SK-N-SH (cell line): ENCODE measurements at regions of chr2 and their contacts with region 1.

Region 1: DNA sequence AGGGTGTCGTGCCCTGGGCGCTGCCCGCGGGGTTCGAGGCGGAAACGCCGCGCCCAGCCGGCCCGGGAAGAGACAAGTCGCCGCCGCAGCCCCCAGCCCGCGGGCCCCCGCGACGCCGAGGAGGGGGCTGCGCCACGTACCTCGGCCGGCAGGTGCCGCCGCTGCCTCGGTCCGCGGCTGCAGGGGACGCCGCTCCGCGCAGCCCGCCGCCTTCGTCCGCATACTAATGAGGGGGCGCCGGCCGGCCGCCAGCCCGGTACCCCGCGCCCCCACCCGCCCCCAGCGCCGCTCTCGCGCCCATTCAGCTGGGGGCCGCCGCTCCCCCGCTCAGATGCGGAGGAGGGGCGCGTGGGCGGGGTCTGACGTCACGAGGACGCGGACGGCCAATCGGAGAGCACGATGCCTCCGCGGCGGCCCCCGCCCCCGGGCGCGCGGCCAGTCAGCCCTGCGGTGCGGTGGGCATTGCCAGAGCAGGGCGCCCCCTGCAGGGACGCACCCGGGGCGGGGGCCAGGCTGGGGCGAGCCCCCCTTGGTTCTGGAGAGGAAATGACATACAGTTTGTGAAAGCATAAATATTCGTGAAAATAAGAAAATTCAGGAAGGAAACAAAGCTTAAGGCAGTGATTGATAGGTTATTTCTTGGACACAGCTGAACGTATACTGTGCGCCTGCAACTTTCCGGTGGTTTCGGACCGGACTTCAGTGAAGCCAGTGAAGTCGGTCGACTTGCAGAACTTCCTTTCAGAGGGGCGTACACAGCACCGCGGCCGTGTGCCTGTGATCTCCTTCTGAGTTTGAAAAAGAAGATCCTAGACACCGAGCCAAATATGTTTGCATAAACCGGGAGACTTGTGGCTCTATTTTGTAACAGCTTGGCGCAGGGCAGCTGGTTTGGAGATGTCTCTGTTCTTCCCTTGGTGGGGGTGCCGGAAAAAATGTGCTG is at the start of gene ST3GAL5:
- DNase-seq: peak; percentile 97
- H3K4me3 ChIP-seq: peak within 1 kb of the TSS; percentile 71 to 73
- H3K27ac ChIP-seq: peak within 1 kb of the TSS; percentile 70 to 72
- H3K4me1 ChIP-seq: peaks cover 18 to 30% of the 10 kb centered on the region in 2 experiments
- H3K27me3 ChIP-seq: no peaks in the 10 kb centered on the region
- CTCF ChIP-seq: peak; percentile 96
- EP300 ChIP-seq: no peak
- RAD21 ChIP-seq: peak; percentile 54
- polyA plus RNA-seq, gene ST3GAL5: 37.6 and 55.7 TPM in 2 replicates

Region 2: DNA sequence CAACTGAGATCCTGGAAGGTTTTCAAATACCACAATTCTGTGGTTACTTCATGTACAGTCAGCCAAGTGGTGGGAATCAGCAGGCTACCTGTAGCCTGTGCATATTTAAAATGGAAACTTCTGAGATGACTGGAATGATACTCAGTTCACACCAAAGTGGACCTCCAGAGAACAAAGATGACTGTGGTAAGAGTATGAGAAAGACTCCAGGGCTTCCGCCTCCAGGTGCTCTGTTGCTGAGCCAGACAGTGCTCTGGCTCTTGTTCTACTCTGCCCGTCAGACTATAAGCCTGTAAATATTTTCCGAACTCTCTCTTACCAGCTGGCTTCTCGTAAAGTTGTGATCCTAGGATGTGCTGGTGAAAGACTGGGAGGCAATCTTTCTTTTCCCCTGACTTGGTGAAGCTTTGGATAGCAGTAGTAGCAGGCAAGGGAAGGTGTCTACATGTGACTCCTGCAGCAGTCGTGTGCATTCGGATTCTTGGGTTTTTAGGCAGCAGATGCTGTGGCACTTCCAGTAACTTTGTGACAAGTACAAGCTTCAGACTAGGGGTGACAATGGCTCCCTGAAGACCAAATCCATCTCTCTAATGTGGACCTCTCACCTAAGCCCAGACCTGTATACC is 23.3 kb before region 1 on chr2:
- CTCF ChIA-PET with region 1: interaction called, 13 read pairs
- POLR2A ChIA-PET with region 1: no interaction called
- DNase-seq: no peak
- H3K4me3 ChIP-seq: no peak overlapping the region
- H3K27ac ChIP-seq: no peak overlapping the region
- H3K4me1 ChIP-seq: 0 out of 4 replicates have a peak, but pooled peaks cover 0 to 3% of the 10 kb centered on the region in 2 experiments
- H3K27me3 ChIP-seq: no peaks in the 10 kb centered on the region
- CTCF ChIP-seq: no peak
- EP300 ChIP-seq: no peak
- RAD21 ChIP-seq: no peak

Region 3: GRCh38 chr2:85905187-85905666 is 16.3 kb after region 1 on chr2:
- CTCF ChIA-PET with region 1: interaction called, 46 read pairs
- POLR2A ChIA-PET with region 1: no interaction called
- DNase-seq: no peak
- H3K4me3 ChIP-seq: no peak overlapping the region
- H3K27ac ChIP-seq: peak overlapping the region in 1 of 2 experiments; percentile 11; a peak in 1 of 4 replicates
- H3K4me1 ChIP-seq: no peaks in the 10 kb centered on the region
- H3K27me3 ChIP-seq: no peaks in the 10 kb centered on the region
- CTCF ChIP-seq: no peak
- EP300 ChIP-seq: no peak
- RAD21 ChIP-seq: no peak

Region 4: GRCh38 chr2:85920810-85921545 is 32.0 kb after region 1 on chr2:
- CTCF ChIA-PET with region 1: interaction called, 16 read pairs
- POLR2A ChIA-PET with region 1: no interaction called
- DNase-seq: no peak
- H3K4me3 ChIP-seq: no peak overlapping the region
- H3K27ac ChIP-seq: no peak overlapping the region
- H3K4me1 ChIP-seq: no peaks in the 10 kb centered on the region
- H3K27me3 ChIP-seq: no peaks in the 10 kb centered on the region
- CTCF ChIP-seq: no peak
- EP300 ChIP-seq: no peak
- RAD21 ChIP-seq: no peak

Region 5: DNA sequence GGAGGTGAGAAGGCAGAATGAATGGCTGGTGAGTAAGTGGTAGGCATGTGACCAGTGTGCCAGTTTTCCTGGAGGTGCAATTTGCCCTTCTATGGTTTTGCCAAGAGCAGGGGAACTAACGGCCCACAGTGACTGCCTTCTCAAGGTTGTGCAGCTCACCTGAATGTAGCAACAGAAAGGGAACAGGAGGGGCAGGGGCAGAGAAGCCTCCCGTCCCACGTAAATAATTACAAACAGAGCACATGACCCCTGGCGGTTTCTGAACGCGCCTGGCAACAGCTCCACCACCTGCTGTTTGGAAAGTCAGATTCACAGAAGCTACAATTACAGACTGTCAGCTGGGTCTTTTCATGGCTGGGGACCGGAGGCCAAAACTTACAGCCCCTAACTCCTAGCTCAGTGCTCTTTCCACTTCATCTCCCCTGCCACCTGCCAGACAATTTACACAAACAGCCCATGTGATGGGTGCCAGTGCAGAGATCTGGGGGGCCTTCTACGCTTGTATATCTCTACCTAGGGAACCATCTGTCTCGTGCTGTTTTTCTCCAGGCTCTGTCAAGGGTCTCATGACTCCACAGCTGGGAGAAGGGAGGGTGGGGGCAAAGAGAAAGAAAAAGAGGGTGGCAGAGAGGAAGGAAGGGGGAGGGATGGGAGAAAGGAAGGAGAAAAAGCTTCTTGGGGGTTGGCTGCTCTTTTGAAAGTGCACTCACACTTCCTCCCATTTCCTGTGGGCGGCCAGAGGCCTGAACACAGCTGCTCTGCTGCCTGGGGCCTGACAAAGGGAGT is 147.1 kb after region 1 on chr2:
- CTCF ChIA-PET with region 1: interaction called, 17 read pairs
- POLR2A ChIA-PET with region 1: no interaction called
- DNase-seq: peak; percentile 63
- H3K4me3 ChIP-seq: no peak overlapping the region
- H3K27ac ChIP-seq: peak overlapping the region; percentile 10 to 44; a peak in 3 of 4 replicates
- H3K4me1 ChIP-seq: peaks cover 11 to 36% of the 10 kb centered on the region in 2 experiments
- H3K27me3 ChIP-seq: no peaks in the 10 kb centered on the region
- CTCF ChIP-seq: no peak
- EP300 ChIP-seq: no peak
- RAD21 ChIP-seq: no peak

Region 6: GRCh38 chr2:86079981-86080911 is 191.3 kb after region 1 on chr2:
- CTCF ChIA-PET with region 1: interaction called, 31 read pairs
- POLR2A ChIA-PET with region 1: no interaction called
- DNase-seq: peak; percentile 69
- H3K4me3 ChIP-seq: peak overlapping the region in 1 of 2 experiments; percentile 17; a peak in 1 of 4 replicates
- H3K27ac ChIP-seq: no peak overlapping the region
- H3K4me1 ChIP-seq: no peaks in the 10 kb centered on the region
- H3K27me3 ChIP-seq: no peaks in the 10 kb centered on the region
- CTCF ChIP-seq: peak; percentile 86
- EP300 ChIP-seq: no peak
- RAD21 ChIP-seq: peak; percentile 81